ENCODE measurements at regions of chr12 and their contacts with region 1.

Region 1: DNA sequence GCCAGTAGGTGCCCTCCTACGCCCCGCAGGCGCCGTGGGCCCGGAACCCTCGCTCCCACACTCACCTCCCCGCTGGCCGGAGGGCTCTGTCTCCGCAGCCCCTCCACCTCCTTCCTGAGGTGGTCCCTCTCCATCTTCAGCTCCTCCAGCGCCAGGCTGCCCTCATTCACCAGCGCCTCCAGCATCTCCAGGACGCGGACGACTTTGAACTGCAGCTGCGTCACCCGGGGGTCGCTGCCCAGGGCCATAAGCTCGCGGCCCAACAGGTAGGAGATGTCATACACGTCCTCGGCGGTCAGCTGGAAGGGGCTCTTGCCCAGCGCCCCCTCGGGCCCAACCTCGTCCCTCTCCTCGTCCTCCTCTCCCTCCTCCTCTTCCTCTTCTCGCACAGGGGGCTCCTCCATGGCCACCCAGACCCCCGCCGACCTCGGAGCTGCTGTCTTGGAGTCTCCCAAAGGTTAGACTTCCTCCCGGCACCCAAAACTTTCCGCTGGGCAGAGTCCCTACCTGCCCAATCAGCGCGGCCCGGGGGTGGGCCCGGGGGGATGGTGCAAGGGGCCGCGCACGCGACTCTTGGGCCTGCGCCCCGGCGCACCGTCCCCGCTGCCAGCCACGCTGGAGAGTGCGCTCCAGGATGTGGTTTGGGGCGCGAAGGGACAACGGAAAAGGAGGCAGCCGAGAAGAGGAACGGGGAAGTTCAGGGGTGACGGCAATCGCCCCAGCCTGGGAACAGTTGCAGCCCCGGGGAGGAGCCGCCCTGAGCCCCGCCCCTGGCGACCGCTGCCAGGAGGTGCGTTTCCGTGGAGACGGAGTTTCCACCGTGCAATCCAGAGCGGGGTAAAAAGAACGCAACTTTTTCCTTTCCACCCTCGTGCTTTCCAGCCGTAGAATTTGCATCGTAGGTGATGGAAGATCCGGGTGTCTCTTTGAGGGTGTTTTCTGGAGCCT is at the start of gene RILPL2:
- DNase-seq: peak; percentile 95
- H3K4me3 ChIP-seq: peak within 1 kb of the TSS; percentile 68 to 89 (median 74)
- H3K27ac ChIP-seq: peak within 1 kb of the TSS; percentile 74 to 82 (median 78)
- H3K4me1 ChIP-seq: peaks cover 0 to 43% (median 31%) of the 10 kb centered on the region in 4 donors
- H3K27me3 ChIP-seq: no peaks in the 10 kb centered on the region
- CTCF ChIP-seq: no peak
- EP300 ChIP-seq: no peak
- POLR2A ChIP-seq: peak in 1 of 2 donors; percentile 39
- total RNA-seq, gene RILPL2: 4.3 to 6.4 (median 5.5) TPM

Region 2: GRCh38 chr12:123388177-123388947 is 47.9 kb before region 1 on chr12:
- intact Hi-C with region 1: loop called (anchors 5 kb)
- DNase-seq: peak; percentile 88
- H3K4me3 ChIP-seq: peak overlapping the region; percentile 39 to 75 (median 68)
- H3K27ac ChIP-seq: peak overlapping the region; percentile 92 to 95 (median 94)
- H3K4me1 ChIP-seq: peaks cover 0 to 53% (median 45%) of the 10 kb centered on the region in 4 donors
- H3K27me3 ChIP-seq: no peaks in the 10 kb centered on the region
- CTCF ChIP-seq: no peak
- EP300 ChIP-seq: no peak
- POLR2A ChIP-seq: no peak

Region 3: GRCh38 chr12:123533672-123534643 is 97.7 kb after region 1 on chr12 and contains the start of gene RILPL1:
- intact Hi-C with region 1: loop called (anchors 10 kb)
- DNase-seq: peak; percentile 81
- H3K4me3 ChIP-seq: peak within 1 kb of the TSS; percentile 66 to 89 (median 74)
- H3K27ac ChIP-seq: peak within 1 kb of the TSS; percentile 88 to 96 (median 92)
- H3K4me1 ChIP-seq: peaks cover 0 to 33% (median 33%) of the 10 kb centered on the region in 4 donors
- H3K27me3 ChIP-seq: no peaks in the 10 kb centered on the region
- CTCF ChIP-seq: peak in 3 of 4 experiments; percentile 18 to 49 (median 31)
- EP300 ChIP-seq: no peak
- POLR2A ChIP-seq: no peak
- total RNA-seq, gene RILPL1: 12.1 to 30.5 (median 18.3) TPM

Measured in sigmoid colon (tissue), 7 donors.